ENCODE measurements at regions of chr17 and their contacts with region 1.

Region 1: GRCh38 chr17:72715906-72716572 is 376.4 kb downstream of the SLC39A11 start:
- DNase-seq: no peak
- H3K4me3 Mint-ChIP-seq: no peak overlapping the region
- H3K27ac Mint-ChIP-seq: no peak overlapping the region
- H3K4me1 Mint-ChIP-seq: peaks cover 69% of the 10 kb centered on the region
- H3K27me3 Mint-ChIP-seq: no peaks in the 10 kb centered on the region

Region 2: GRCh38 chr17:72592242-72592966 is 123.6 kb before region 1 on chr17:
- CTCF ChIA-PET with region 1: interaction called, 3 read pairs
- POLR2A ChIA-PET with region 1: interaction called, 19 read pairs
- DNase-seq: peak; percentile 85
- H3K4me3 Mint-ChIP-seq: peak overlapping the region; percentile 92
- H3K27ac Mint-ChIP-seq: peak overlapping the region; percentile 50
- H3K4me1 Mint-ChIP-seq: peaks cover 43% of the 10 kb centered on the region
- H3K27me3 Mint-ChIP-seq: peaks cover 43% of the 10 kb centered on the region

Region 3: DNA sequence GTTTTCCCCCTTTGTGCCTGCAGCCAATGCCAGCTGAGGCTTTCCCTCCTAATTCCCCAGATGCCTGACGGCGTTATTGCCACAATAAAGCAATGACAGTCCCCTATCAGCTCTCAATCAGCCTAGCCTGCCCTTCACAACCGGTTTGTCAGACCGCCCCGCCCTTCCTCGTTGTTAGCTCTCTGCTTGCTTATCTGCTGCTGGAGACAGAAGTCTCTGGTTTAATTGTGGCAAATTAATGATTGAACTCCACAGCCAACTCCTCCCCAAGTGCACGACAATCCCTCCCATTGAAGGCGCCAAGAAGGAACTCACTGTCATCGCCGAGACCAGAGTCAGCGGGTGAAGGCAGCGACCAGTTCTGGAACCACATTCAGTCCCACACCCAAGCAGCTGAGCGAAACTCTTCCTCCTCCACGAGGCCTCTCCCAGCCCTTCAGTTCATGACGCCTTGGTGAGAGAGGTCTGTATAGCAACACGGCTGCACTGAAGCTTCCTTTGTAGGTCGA is 98.0 kb before region 1 on chr17:
- CTCF ChIA-PET with region 1: interaction called, 5 read pairs
- POLR2A ChIA-PET with region 1: interaction called, 14 read pairs
- DNase-seq: peak; percentile 72
- H3K4me3 Mint-ChIP-seq: peak overlapping the region; percentile 63
- H3K27ac Mint-ChIP-seq: peak overlapping the region; percentile 83
- H3K4me1 Mint-ChIP-seq: peaks cover 33% of the 10 kb centered on the region
- H3K27me3 Mint-ChIP-seq: peaks cover 30% of the 10 kb centered on the region

Region 4: DNA sequence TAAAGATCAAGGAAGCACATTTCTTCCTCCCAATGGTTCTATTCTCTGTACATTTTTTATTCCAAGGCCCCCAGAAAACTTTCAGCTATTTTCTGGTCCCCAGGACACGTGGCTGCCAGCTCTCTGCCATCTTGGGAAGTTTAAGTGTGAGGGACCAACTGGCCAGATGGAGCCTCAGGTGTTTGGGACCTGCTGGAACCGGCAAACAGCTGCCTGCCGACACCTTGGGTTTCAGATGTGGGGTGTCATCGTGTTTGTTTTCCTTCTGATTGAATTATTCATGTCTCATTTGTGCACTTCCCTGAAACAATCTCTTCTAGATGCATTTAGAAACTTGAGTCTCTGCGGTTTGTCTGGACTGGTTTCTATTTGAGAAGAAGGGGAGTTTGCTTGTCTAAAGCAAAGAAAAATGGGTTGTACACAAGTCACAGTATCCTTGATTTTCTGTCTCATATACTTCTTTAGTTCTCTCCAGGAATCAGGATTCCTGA is 10.1 kb before region 1 on chr17:
- CTCF ChIA-PET with region 1: interaction called, 14 read pairs
- POLR2A ChIA-PET with region 1: interaction called, 45 read pairs
- DNase-seq: no peak
- H3K4me3 Mint-ChIP-seq: no peak overlapping the region
- H3K27ac Mint-ChIP-seq: peak overlapping the region; percentile 85
- H3K4me1 Mint-ChIP-seq: peaks cover 63% of the 10 kb centered on the region
- H3K27me3 Mint-ChIP-seq: no peaks in the 10 kb centered on the region

Region 5: DNA sequence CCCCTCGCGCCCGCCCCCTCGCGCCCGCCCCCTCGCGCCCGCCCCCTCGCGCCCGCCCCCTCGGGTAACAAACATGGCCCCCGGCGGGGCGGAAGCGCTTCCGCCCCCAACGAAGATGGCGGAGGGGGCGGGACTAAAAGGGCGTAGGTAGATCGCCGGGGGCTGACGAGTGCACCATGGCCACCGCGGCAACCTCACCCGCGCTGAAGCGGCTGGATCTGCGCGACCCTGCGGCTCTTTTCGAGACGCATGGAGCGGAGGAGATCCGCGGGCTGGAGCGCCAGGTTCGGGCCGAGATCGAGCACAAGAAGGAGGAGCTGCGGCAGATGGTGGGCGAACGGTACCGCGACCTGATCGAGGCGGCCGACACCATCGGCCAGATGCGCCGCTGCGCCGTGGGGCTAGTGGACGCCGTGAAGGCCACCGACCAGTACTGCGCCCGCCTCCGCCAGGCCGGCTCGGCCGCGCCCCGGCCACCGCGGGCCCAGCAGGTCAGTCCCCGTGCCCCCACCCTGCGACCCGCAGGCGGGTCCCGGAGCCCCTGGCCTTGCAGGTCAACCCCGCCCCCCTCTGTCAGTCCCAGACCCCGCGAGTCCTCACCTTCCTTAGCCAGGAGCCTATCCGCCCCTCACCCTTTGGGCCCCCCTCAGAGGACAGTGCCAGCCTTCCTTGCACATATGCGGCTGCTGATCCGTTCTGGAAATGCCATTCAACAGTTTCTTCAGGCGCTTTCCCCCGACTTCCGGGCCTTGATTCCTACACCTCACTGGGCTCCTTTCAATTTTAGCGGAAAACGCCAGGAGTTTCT is 477.1 kb after region 1 on chr17 and contains the start of gene COG1:
- CTCF ChIA-PET with region 1: interaction called, 4 read pairs
- POLR2A ChIA-PET with region 1: interaction called, 15 read pairs
- DNase-seq: peak; percentile 92
- H3K4me3 Mint-ChIP-seq: peak within 1 kb of the TSS; percentile 95
- H3K27ac Mint-ChIP-seq: peak within 1 kb of the TSS; percentile 94
- H3K4me1 Mint-ChIP-seq: peaks cover 38% of the 10 kb centered on the region
- H3K27me3 Mint-ChIP-seq: no peaks in the 10 kb centered on the region
- total RNA-seq, gene COG1: 30.4 to 32.9 TPM